ENCODE measurements at regions of chrX and their contacts with region 1.

Region 1: DNA sequence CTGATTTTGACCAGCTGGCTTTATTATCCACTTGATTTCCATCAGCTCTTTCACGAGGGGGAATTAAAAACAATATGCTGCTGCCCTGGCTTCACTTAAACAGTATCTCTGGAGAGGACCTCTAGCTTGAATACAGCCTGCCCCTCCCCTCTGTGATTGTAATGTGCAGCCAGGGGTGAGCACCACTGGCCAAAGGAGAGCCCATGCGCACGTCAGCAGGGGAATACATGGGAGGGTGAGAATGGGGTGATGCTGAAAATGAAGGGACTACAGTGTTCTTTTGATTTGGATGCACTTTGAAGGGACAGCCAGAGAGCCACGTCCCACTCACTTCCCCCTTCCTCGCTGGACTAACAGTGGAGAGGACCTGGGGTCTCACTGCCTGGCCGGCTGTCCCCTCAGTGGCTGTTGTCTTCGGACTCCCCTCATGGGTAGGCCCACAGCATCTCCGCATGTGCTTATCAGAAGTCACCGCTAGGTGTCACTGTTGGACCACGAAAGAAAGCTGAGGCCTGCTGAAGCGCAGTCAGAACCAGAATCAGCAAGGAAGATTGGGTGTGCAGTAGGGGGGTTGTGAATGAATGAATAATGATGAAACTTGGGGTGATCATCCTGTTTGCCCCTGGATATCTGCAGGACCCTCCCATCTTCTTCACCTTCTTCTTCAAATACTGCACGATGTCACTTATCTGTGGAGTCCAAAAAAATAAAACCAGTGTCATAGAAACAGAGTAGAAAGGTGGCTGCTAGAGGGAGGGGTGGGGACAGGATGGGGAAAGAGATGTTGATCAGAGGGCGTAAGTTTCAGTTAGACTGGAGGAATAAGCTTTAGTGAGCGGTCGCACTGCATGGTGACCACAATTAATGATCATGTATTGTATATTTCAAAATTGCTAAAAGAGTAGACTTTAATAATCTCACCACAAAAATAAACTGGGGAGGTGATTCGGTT is 32.8 kb downstream of the CLCN4 start:
- DNase-seq: peak; percentile 72
- H3K4me3 ChIP-seq: no peak overlapping the region
- H3K27ac ChIP-seq: no peak overlapping the region
- H3K4me1 ChIP-seq: no peaks in the 10 kb centered on the region; a peak in 1 of 4 replicates
- H3K27me3 ChIP-seq: peaks cover 21% of the 10 kb centered on the region; the same call in 1 of the 2 replicates
- CTCF ChIP-seq: peak; percentile 82
- EP300 ChIP-seq: no peak
- RAD21 ChIP-seq: peak; percentile 94

Region 2: DNA sequence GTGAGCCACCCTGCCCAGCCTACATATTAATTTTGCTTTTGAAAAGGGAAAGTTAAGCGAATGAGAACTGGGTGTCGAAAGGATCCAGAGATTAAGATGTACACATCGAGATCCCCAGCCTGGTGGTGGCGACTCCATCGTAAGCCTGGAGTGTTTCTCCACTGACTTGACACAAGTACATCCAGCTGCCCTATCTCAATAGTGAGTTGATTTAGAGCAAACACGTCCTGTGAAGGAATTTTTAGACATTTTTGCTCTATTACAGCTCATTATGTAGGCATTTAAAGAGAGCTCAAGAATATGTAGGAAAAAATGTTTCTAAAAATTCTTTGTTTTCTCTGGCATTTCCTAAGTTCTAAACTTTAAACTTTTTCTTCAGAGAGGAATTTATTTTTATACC is 234.1 kb before region 1 on chrX:
- CTCF ChIA-PET with region 1: no interaction called
- POLR2A ChIA-PET with region 1: no interaction called
- DNase-seq: no peak
- H3K4me3 ChIP-seq: no peak overlapping the region
- H3K27ac ChIP-seq: no peak overlapping the region
- H3K4me1 ChIP-seq: no peaks in the 10 kb centered on the region
- H3K27me3 ChIP-seq: peaks cover 10% of the 10 kb centered on the region; the same call in 1 of the 2 replicates
- CTCF ChIP-seq: no peak
- EP300 ChIP-seq: no peak
- RAD21 ChIP-seq: no peak

Region 3: DNA sequence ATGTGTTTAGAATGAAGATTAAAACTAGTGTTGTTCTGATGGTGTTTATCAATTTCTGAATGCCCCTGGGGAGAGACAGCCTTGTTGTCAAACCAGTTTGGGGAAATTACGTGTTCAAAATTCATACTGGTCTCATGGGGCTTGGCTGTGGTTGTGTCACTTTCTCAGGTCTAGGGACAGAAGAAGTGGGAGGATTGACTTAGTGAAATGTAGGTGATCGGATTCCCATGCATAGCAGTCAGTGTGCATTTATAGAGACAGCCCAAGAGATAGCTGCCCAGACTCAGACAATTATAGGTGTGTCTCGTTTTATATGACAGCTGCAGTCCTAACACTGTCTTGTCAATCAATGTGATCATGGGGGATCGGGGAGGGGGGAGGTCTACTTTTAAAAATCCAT is 127.2 kb before region 1 on chrX:
- CTCF ChIA-PET with region 1: no interaction called
- POLR2A ChIA-PET with region 1: no interaction called
- DNase-seq: no peak
- H3K4me3 ChIP-seq: no peak overlapping the region
- H3K27ac ChIP-seq: no peak overlapping the region
- H3K4me1 ChIP-seq: no peaks in the 10 kb centered on the region
- H3K27me3 ChIP-seq: no peaks in the 10 kb centered on the region; the same call in 1 of the 2 replicates
- CTCF ChIP-seq: no peak
- EP300 ChIP-seq: no peak
- RAD21 ChIP-seq: no peak

Region 4: DNA sequence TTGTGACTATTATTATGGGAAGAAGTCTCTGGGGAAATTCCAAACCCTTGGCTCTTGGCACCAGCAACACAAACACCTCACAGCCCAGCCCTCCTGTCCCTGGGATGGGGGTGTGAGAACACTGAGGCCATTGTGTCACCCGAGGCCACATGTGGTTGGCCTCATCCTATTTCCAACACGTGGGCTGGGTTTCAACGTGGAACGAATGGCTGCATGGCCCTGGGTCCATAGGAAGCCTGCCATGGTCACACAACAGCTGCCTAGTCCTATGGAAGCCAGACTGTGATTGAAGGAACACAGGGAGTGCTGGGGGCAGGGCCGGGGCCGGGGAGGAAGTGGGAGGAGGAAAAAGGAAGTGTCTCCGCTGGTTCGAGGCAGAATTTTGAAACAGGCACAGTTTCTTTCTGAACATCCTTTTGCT is 22.9 kb before region 1 on chrX:
- CTCF ChIA-PET with region 1: interaction called, 20 read pairs
- POLR2A ChIA-PET with region 1: no interaction called
- DNase-seq: no peak
- H3K4me3 ChIP-seq: no peak overlapping the region
- H3K27ac ChIP-seq: no peak overlapping the region
- H3K4me1 ChIP-seq: no peaks in the 10 kb centered on the region
- H3K27me3 ChIP-seq: no peaks in the 10 kb centered on the region
- CTCF ChIP-seq: no peak
- EP300 ChIP-seq: no peak
- RAD21 ChIP-seq: no peak

Region 5: GRCh38 chrX:10223276-10223675 is 33.7 kb after region 1 on chrX:
- CTCF ChIA-PET with region 1: interaction called, 13 read pairs
- POLR2A ChIA-PET with region 1: no interaction called
- DNase-seq: no peak
- H3K4me3 ChIP-seq: no peak overlapping the region
- H3K27ac ChIP-seq: no peak overlapping the region
- H3K4me1 ChIP-seq: no peaks in the 10 kb centered on the region; a peak in 1 of 4 replicates
- H3K27me3 ChIP-seq: no peaks in the 10 kb centered on the region
- CTCF ChIP-seq: no peak
- EP300 ChIP-seq: no peak
- RAD21 ChIP-seq: no peak

Region 6: GRCh38 chrX:10329984-10330383 is 140.4 kb after region 1 on chrX:
- CTCF ChIA-PET with region 1: interaction called, 13 read pairs
- POLR2A ChIA-PET with region 1: no interaction called
- DNase-seq: no peak
- H3K4me3 ChIP-seq: no peak overlapping the region
- H3K27ac ChIP-seq: no peak overlapping the region
- H3K4me1 ChIP-seq: no peaks in the 10 kb centered on the region; a peak in 1 of 4 replicates
- H3K27me3 ChIP-seq: no peaks in the 10 kb centered on the region; the same call in 1 of the 2 replicates
- CTCF ChIP-seq: no peak
- EP300 ChIP-seq: no peak
- RAD21 ChIP-seq: no peak

Region 7: DNA sequence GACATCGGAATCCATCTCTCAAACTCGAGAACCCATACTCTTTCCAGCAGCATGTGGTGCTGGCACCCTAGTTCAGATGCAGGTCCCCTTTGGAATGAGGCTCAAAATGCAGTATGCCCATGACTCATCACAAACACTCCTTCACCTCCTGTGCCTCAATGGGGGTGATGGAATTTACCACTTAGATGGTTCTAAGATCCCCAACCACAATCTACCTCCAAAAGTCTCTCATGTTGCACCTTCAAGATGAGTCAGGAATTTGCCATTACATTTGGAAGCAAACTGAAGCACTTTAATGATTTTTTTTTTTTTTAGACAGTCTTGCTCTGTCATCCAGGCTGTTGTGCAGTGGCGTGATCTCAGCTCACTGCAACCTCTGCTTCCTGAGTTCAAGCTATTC is 439.3 kb after region 1 on chrX:
- CTCF ChIA-PET with region 1: interaction called, 50 read pairs
- POLR2A ChIA-PET with region 1: no interaction called
- DNase-seq: no peak
- H3K4me3 ChIP-seq: no peak overlapping the region
- H3K27ac ChIP-seq: no peak overlapping the region
- H3K4me1 ChIP-seq: no peaks in the 10 kb centered on the region
- H3K27me3 ChIP-seq: no peaks in the 10 kb centered on the region
- CTCF ChIP-seq: no peak
- EP300 ChIP-seq: no peak
- RAD21 ChIP-seq: no peak

Region 8: GRCh38 chrX:10656214-10656613 is 466.6 kb after region 1 on chrX:
- CTCF ChIA-PET with region 1: interaction called, 16 read pairs
- POLR2A ChIA-PET with region 1: no interaction called
- DNase-seq: no peak
- H3K4me3 ChIP-seq: no peak overlapping the region
- H3K27ac ChIP-seq: no peak overlapping the region
- H3K4me1 ChIP-seq: no peaks in the 10 kb centered on the region
- H3K27me3 ChIP-seq: no peaks in the 10 kb centered on the region
- CTCF ChIP-seq: no peak
- EP300 ChIP-seq: no peak
- RAD21 ChIP-seq: no peak

Region 9: GRCh38 chrX:11100281-11101035 is 910.9 kb after region 1 on chrX:
- CTCF ChIA-PET with region 1: interaction called, 24 read pairs
- POLR2A ChIA-PET with region 1: no interaction called
- DNase-seq: peak; percentile 34
- H3K4me3 ChIP-seq: no peak overlapping the region
- H3K27ac ChIP-seq: peak overlapping the region in 1 of 2 experiments; percentile 27; a peak in 2 of 4 replicates
- H3K4me1 ChIP-seq: peaks cover 0 to 4% of the 10 kb centered on the region in 2 experiments; a peak in 3 of 4 replicates
- H3K27me3 ChIP-seq: no peaks in the 10 kb centered on the region
- CTCF ChIP-seq: peak; percentile 74
- EP300 ChIP-seq: no peak
- RAD21 ChIP-seq: peak; percentile 79

Region 10: GRCh38 chrX:11341274-11342201 is 1151.9 kb after region 1 on chrX:
- CTCF ChIA-PET with region 1: no interaction called
- POLR2A ChIA-PET with region 1: no interaction called
- DNase-seq: no peak
- H3K4me3 ChIP-seq: peak overlapping the region in 1 of 2 experiments; percentile 9; a peak in 1 of 4 replicates
- H3K27ac ChIP-seq: peak overlapping the region in 1 of 2 experiments; percentile 84; a peak in 2 of 4 replicates
- H3K4me1 ChIP-seq: no peaks in the 10 kb centered on the region
- H3K27me3 ChIP-seq: peaks cover 4% of the 10 kb centered on the region; the same call in 1 of the 2 replicates
- CTCF ChIP-seq: no peak
- EP300 ChIP-seq: peak in 1 of 2 experiments; percentile 30; a peak in 1 of 4 replicates
- RAD21 ChIP-seq: no peak

Measured in SK-N-SH (cell line).